ENCODE measurements at regions of chr2 and their contacts with region 1.

Region 1: GRCh38 chr2:134118279-134119116 is 135.4 kb upstream of the MGAT5 start:
- DNase-seq: peak; percentile 73 to 98 (median 90)
- H3K4me3 ChIP-seq: peak overlapping the region in 19 of 59 donors; percentile 1 to 97 (median 88)
- H3K27ac ChIP-seq: peak overlapping the region in 56 of 59 donors; percentile 13 to 98 (median 93)
- H3K27me3 ChIP-seq: no peaks in the 10 kb centered on the region
- CTCF ChIP-seq: peak; percentile 76 to 99 (median 93)

Region 2: GRCh38 chr2:133886735-133887660 is 231.5 kb before region 1 on chr2:
- intact Hi-C with region 1: loop called (anchors 2 to 5 kb)
- DNase-seq: peak; percentile 49 to 91 (median 84)
- H3K4me3 ChIP-seq: peak overlapping the region in 17 of 59 donors; percentile 1 to 37 (median 21)
- H3K27ac ChIP-seq: peak overlapping the region in 1 of 59 donors; percentile 10
- H3K27me3 ChIP-seq: peaks cover 0 to 2% (median 0%) of the 10 kb centered on the region in 45 donors
- CTCF ChIP-seq: peak; percentile 55 to 83 (median 72)

Region 3: DNA sequence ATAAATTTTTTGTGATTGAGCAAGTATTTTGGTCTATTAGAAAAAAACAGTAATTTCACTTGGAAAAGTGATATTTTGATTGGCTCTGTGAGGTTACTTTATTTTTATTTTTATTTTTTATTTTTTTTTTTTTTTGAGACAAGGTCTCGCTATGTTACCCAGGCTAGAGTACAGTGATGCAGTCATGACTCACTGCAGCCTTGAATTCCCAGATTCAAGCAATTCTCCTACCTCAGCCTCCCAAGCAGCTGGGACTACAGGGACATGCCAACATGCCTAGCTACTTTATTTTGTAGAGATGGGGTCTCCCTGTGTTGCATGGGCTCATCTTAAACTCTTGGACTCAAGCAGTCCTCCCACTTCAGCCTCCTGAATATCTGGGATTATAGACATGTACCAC is 74.5 kb after region 1 on chr2:
- intact Hi-C with region 1: loop called in 1 of 2 experiments (anchors 5 kb)
- DNase-seq: no peak
- H3K4me3 ChIP-seq: no peak overlapping the region
- H3K27ac ChIP-seq: no peak overlapping the region
- H3K27me3 ChIP-seq: no peaks in the 10 kb centered on the region
- CTCF ChIP-seq: no peak

Region 4: GRCh38 chr2:134245340-134245984 is 127.0 kb after region 1 on chr2:
- intact Hi-C with region 1: loop called (anchors 1 to 2 kb)
- DNase-seq: peak in 9 of 10 donors; percentile 60 to 92 (median 80)
- H3K4me3 ChIP-seq: no peak overlapping the region
- H3K27ac ChIP-seq: peak overlapping the region in 11 of 59 donors; percentile 6 to 69 (median 33)
- H3K27me3 ChIP-seq: no peaks in the 10 kb centered on the region
- CTCF ChIP-seq: peak; percentile 52 to 93 (median 80)

Region 5: GRCh38 chr2:134411828-134412638 is 293.5 kb after region 1 on chr2:
- intact Hi-C with region 1: loop called (anchors 1 kb)
- DNase-seq: peak; percentile 50 to 92 (median 86)
- H3K4me3 ChIP-seq: peak overlapping the region in 47 of 59 donors; percentile 1 to 50 (median 25)
- H3K27ac ChIP-seq: peak overlapping the region; percentile 44 to 95 (median 90)
- H3K27me3 ChIP-seq: no peaks in the 10 kb centered on the region
- CTCF ChIP-seq: peak; percentile 49 to 91 (median 79)

Region 6: GRCh38 chr2:134918526-134919340 is 800.2 kb after region 1 on chr2 and contains the start of gene CCNT2:
- intact Hi-C with region 1: loop called in 1 of 2 experiments (anchors 5 kb)
- DNase-seq: peak; percentile 97 to 100 (median 98)
- H3K4me3 ChIP-seq: peak within 1 kb of the TSS; percentile 60 to 99 (median 93)
- H3K27ac ChIP-seq: peak within 1 kb of the TSS; percentile 85 to 99 (median 97)
- H3K27me3 ChIP-seq: no peaks in the 10 kb centered on the region
- CTCF ChIP-seq: peak in 20 of 56 donors; percentile 7 to 38 (median 22)
- total RNA-seq, gene CCNT2: 37.5 to 74.9 (median 55.2) TPM